MCF 10A (cell line): ENCODE measurements at regions of chr4 and their contacts with region 1.

Region 1: GRCh38 chr4:131091896-131092295 is 1995.9 kb downstream of the C4orf33 start:
- DNase-seq: peak; percentile 60
- H3K4me3 Mint-ChIP-seq: no peak overlapping the region
- H3K27ac Mint-ChIP-seq: no peak overlapping the region
- H3K4me1 Mint-ChIP-seq: no peaks in the 10 kb centered on the region
- H3K27me3 Mint-ChIP-seq: no peaks in the 10 kb centered on the region
- CTCF ChIP-seq: peak; percentile 45

Region 2: DNA sequence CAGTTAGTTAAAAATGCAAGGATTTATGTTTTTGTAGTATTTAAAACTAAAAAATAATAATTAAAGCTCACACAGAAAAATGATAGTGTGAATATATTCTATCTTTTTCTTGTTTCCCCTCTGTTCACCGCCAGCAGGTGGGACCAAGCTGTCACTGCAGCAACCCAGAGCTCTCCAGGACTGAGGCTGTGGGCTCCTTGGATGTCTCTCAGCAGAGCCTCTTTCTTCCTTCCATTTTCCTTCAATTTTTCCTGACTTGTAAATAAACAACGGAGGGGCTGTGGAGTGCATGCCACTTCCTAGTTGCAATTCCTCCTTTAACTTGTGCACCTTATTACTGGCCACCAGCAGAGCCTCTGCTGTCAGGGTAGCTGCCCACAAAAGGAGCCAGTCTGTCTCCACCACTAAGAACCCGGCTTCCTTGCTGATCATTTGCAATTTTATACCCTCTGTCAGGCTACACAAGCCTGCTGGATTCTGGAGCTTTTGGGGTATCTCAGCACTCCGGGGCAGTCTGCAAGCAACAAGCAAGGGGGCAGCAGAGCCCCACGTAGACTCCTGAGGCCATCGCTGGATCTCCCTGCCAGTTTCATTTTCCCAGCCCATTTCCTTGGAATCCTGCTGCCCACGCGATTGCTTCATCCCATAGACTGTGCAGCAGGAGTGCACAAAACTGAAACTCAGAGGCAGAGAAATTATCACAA is 528.6 kb before region 1 on chr4:
- CTCF ChIA-PET with region 1: no interaction called
- POLR2A ChIA-PET with region 1: no interaction called
- intact Hi-C with region 1: loop called (anchors 2 kb)
- DNase-seq: peak; percentile 91
- H3K4me3 Mint-ChIP-seq: peak overlapping the region; percentile 74
- H3K27ac Mint-ChIP-seq: peak overlapping the region; percentile 17
- H3K4me1 Mint-ChIP-seq: peaks cover 17% of the 10 kb centered on the region
- H3K27me3 Mint-ChIP-seq: no peaks in the 10 kb centered on the region
- CTCF ChIP-seq: peak; percentile 34

Region 3: DNA sequence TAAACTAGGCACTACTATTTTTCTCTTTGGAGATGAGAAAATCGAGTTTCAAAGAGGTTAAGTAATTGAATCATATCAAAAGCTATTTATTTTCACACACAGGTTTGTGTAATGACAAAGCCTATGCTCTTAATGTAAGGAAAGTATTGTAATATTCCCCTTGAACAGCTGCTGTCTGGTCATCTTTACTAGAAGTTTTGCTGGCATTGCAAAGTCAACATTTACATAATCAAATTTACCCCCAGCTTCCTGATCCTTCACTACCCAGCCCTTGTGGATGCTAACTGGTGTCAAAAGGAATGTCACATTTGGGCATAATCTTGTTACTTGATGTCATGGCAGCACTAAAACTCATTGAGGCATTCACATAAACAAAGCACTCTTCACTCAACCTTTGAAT is 26.6 kb after region 1 on chr4:
- CTCF ChIA-PET with region 1: no interaction called
- POLR2A ChIA-PET with region 1: no interaction called
- intact Hi-C with region 1: no loop called
- DNase-seq: no peak
- H3K4me3 Mint-ChIP-seq: no peak overlapping the region
- H3K27ac Mint-ChIP-seq: no peak overlapping the region
- H3K4me1 Mint-ChIP-seq: no peaks in the 10 kb centered on the region
- H3K27me3 Mint-ChIP-seq: no peaks in the 10 kb centered on the region
- CTCF ChIP-seq: no peak

Region 4: DNA sequence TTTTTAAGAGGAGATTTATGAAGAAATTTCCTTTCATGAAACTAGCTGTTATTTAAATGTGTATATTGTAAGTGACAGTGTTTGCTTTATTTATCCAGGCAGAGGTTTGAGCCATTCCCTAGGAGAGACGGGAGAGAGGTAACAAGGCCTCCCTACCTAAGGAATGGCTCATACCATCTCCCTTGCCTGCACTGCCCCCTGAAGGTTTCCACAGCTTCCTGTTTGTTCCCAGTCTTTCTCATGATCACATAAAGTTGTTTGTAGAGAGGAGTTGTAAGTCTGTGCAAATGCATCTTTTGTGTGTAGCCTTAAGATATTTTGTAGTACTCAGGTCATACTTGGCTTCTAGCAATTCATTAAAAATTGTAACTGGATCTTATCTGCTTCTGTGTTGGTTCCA is 552.7 kb after region 1 on chr4:
- CTCF ChIA-PET with region 1: interaction called, 4 read pairs
- POLR2A ChIA-PET with region 1: no interaction called
- intact Hi-C with region 1: loop called (anchors 1 kb)
- DNase-seq: peak; percentile 50
- H3K4me3 Mint-ChIP-seq: no peak overlapping the region
- H3K27ac Mint-ChIP-seq: no peak overlapping the region
- H3K4me1 Mint-ChIP-seq: no peaks in the 10 kb centered on the region
- H3K27me3 Mint-ChIP-seq: no peaks in the 10 kb centered on the region
- CTCF ChIP-seq: peak; percentile 40

Region 5: DNA sequence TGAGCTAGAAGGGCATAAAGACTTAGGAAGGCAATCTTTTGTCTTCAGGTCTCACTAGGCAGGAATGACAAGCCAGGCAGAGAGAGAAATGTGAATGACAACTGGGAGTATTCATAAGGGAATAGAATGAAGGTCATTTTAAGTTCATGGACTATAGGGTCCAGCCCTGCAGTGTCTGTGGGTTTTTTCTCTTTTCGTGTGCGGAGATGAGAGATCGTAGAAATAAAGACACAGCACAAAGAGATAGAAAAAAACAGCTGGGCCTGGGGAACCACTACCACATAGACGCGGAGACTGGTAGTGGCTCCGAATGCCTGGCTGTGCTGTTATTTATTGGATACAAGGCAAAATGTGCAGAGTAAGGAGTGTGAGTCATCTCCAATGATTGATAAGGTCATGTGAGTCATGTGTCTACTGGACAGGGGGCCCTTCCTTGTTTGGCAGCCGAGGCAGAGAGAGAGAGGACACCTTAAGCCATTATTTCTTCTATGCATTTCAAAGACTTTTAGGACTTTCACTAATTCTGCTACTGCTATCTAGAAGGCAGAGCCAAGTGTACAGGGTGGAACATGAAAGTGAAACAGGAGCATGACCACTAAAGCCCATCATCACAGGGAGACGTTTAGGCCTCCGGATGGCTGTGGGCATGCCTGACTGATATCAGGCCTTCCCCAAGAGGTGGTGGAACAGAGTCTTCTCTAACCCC is 1135.4 kb after region 1 on chr4:
- CTCF ChIA-PET with region 1: interaction called, 3 read pairs
- POLR2A ChIA-PET with region 1: no interaction called
- intact Hi-C with region 1: loop called (anchors 10 kb)
- DNase-seq: no peak
- H3K4me3 Mint-ChIP-seq: no peak overlapping the region
- H3K27ac Mint-ChIP-seq: no peak overlapping the region
- H3K4me1 Mint-ChIP-seq: no peaks in the 10 kb centered on the region
- H3K27me3 Mint-ChIP-seq: no peaks in the 10 kb centered on the region
- CTCF ChIP-seq: no peak

Region 6: GRCh38 chr4:132614682-132615081 is 1522.8 kb after region 1 on chr4:
- CTCF ChIA-PET with region 1: interaction called, 6 read pairs
- POLR2A ChIA-PET with region 1: no interaction called
- intact Hi-C with region 1: loop called (anchors 2 kb)
- DNase-seq: peak; percentile 9
- H3K4me3 Mint-ChIP-seq: no peak overlapping the region
- H3K27ac Mint-ChIP-seq: no peak overlapping the region
- H3K4me1 Mint-ChIP-seq: no peaks in the 10 kb centered on the region
- H3K27me3 Mint-ChIP-seq: no peaks in the 10 kb centered on the region
- CTCF ChIP-seq: peak; percentile 43

Region 7: GRCh38 chr4:132642016-132642817 is 1550.3 kb after region 1 on chr4:
- CTCF ChIA-PET with region 1: interaction called, 4 read pairs
- POLR2A ChIA-PET with region 1: no interaction called
- intact Hi-C with region 1: loop called (anchors 1 kb)
- DNase-seq: peak; percentile 66
- H3K4me3 Mint-ChIP-seq: no peak overlapping the region
- H3K27ac Mint-ChIP-seq: no peak overlapping the region
- H3K4me1 Mint-ChIP-seq: no peaks in the 10 kb centered on the region
- H3K27me3 Mint-ChIP-seq: no peaks in the 10 kb centered on the region
- CTCF ChIP-seq: peak; percentile 85